ENCODE measurements at regions of chr10 and their contacts with region 1.

Region 1: GRCh38 chr10:5692461-5693358 is 8.1 kb downstream of the TASOR2 start:
- DNase-seq: peak; percentile 77
- H3K4me3 Mint-ChIP-seq: peak overlapping the region; percentile 68
- H3K27ac Mint-ChIP-seq: peak overlapping the region; percentile 76
- H3K4me1 Mint-ChIP-seq: peaks cover 74% of the 10 kb centered on the region
- H3K27me3 Mint-ChIP-seq: no peaks in the 10 kb centered on the region

Region 2: DNA sequence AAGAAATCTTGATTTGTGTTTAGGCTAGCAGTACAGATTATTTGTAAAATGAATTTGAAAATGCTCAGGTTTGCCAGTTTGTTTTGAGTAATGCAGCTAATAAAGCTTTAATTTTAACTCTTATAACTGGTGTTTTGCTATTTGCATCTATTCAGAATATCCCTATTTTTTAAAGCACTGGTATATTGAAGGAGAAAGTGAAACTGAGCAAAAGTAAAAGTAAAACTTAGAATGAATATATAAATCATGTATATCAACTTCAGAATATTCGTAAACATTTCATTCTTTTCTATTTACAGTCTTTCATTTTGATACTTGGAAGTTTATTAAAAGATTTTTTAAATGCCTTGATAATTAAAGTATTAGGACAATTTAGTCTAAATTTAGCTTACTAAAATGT is 18.1 kb after region 1 on chr10:
- CTCF ChIA-PET with region 1: interaction called, 4 read pairs
- intact Hi-C with region 1: loop called (anchors 2 kb)
- DNase-seq: no peak
- H3K4me3 Mint-ChIP-seq: no peak overlapping the region
- H3K27ac Mint-ChIP-seq: no peak overlapping the region
- H3K4me1 Mint-ChIP-seq: peaks cover 63% of the 10 kb centered on the region
- H3K27me3 Mint-ChIP-seq: no peaks in the 10 kb centered on the region

Measured in activated naive CD4-positive, alpha-beta T cell treated with anti-CD3 and anti-CD28 coated beads for 36 hours (primary cell).